ENCODE measurements at regions of chr3 and their contacts with region 1.

Region 1: GRCh38 chr3:136075218-136075808 is 109.8 kb downstream of the PPP2R3A start:
- DNase-seq: peak; percentile 82
- H3K4me3 Mint-ChIP-seq: no peak overlapping the region
- H3K27ac Mint-ChIP-seq: no peak overlapping the region
- H3K4me1 Mint-ChIP-seq: peaks cover 2% of the 10 kb centered on the region
- H3K27me3 Mint-ChIP-seq: no peaks in the 10 kb centered on the region

Region 2: DNA sequence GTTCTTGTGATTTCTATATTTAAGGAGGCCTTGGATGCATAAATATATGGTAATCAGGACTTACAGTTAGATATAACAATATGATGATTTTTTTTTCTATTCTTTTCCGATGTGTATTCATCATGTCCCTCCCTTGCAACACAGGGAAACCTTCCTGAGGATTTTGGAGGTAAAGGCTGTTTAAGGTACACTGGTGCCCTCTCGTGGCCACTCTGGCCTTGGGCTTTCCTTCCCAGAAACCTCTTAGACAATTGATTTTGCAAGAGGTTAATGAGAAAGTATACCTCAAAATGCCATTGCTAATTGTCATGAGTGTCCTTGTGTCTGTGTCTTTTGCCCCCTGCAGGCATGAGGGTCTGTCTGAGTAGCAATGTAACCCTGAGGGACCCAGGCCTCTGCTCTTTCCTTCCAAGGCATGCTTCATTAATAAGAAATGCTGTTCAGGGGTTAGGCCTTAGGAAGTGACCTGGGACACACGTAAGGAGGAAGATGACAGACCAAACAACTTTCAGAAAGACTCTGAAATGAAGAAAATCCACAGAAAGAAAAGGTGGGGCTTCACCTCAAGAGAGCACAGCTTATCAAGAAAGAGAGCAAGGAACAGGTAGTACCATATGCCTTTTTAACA is 180.1 kb before region 1 on chr3:
- CTCF ChIA-PET with region 1: no interaction called
- POLR2A ChIA-PET with region 1: no interaction called
- intact Hi-C with region 1: no loop called
- DNase-seq: peak; percentile 57
- H3K4me3 Mint-ChIP-seq: no peak overlapping the region
- H3K27ac Mint-ChIP-seq: no peak overlapping the region
- H3K4me1 Mint-ChIP-seq: no peaks in the 10 kb centered on the region
- H3K27me3 Mint-ChIP-seq: no peaks in the 10 kb centered on the region

Region 3: DNA sequence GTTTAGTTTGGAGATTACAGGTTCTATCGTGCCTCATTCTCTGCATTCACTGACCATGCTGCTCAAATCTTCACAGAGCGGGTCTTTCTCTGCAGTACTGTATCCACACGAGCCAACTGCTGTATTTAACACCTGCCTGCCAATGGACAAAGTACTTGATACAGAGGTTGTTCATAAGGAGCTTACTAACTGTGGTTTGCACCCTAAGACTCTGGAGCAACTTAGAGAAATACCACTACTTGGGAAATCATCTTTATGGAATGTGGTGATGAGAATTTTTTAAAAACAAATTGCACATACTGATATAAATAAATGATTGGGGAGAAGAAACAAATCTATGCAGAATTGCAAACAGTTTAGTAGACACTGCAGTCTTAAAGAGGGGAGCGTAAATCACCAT is 19.8 kb before region 1 on chr3:
- CTCF ChIA-PET with region 1: no interaction called
- POLR2A ChIA-PET with region 1: no interaction called
- intact Hi-C with region 1: no loop called
- DNase-seq: no peak
- H3K4me3 Mint-ChIP-seq: no peak overlapping the region
- H3K27ac Mint-ChIP-seq: no peak overlapping the region
- H3K4me1 Mint-ChIP-seq: no peaks in the 10 kb centered on the region
- H3K27me3 Mint-ChIP-seq: peaks cover 13% of the 10 kb centered on the region

Region 4: GRCh38 chr3:136196401-136197158 is 121.3 kb after region 1 on chr3:
- CTCF ChIA-PET with region 1: interaction called, 4 read pairs
- POLR2A ChIA-PET with region 1: no interaction called
- intact Hi-C with region 1: loop called (anchors 2 kb)
- DNase-seq: peak; percentile 100
- H3K4me3 Mint-ChIP-seq: peak overlapping the region; percentile 95
- H3K27ac Mint-ChIP-seq: peak overlapping the region; percentile 99
- H3K4me1 Mint-ChIP-seq: peaks cover 18% of the 10 kb centered on the region
- H3K27me3 Mint-ChIP-seq: peaks cover 5% of the 10 kb centered on the region

Region 5: DNA sequence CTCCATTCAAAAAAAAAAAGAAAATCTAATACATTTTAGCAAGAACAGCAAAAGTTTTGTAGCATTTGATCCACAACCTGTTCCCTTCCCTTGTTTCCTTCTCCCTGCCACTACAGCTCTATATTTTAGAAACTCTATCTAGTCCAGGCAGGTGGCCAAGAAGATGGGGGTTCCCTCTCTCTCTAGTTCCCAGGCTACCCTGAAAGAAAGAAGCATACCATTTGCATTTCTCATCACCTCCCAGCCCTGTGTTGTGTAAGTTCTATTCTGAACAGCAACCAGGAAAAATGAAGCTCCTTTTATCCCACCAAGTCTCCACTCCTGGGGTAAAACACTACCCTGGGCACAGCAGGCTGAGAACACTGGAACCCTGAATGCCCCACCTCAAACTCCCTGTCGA is 274.8 kb after region 1 on chr3:
- CTCF ChIA-PET with region 1: interaction called, 7 read pairs
- POLR2A ChIA-PET with region 1: no interaction called
- intact Hi-C with region 1: loop called (anchors 5 kb)
- DNase-seq: no peak
- H3K4me3 Mint-ChIP-seq: no peak overlapping the region
- H3K27ac Mint-ChIP-seq: no peak overlapping the region
- H3K4me1 Mint-ChIP-seq: peaks cover 14% of the 10 kb centered on the region
- H3K27me3 Mint-ChIP-seq: no peaks in the 10 kb centered on the region

Region 6: DNA sequence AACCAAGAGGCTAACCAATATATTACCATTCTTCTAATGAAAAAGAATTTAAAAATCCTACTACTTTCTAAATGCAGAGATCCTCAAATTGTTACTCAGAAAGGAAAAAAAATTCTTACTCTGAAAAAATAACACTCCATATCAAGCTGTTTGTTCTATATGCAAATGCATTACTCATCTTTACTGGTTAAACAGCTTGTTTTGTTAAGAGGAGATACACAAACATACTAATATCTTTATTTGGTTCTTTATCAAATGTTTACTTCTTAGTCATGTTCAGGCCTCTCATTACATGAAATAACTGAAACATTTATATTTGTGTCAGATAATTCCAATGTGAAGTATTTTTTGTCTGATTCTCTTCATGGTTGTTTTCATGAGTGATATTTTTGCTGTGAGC is 321.6 kb after region 1 on chr3:
- CTCF ChIA-PET with region 1: interaction called, 10 read pairs
- POLR2A ChIA-PET with region 1: no interaction called
- intact Hi-C with region 1: no loop called
- DNase-seq: no peak
- H3K4me3 Mint-ChIP-seq: no peak overlapping the region
- H3K27ac Mint-ChIP-seq: no peak overlapping the region
- H3K4me1 Mint-ChIP-seq: no peaks in the 10 kb centered on the region
- H3K27me3 Mint-ChIP-seq: no peaks in the 10 kb centered on the region

Region 7: GRCh38 chr3:136818769-136819391 is 743.6 kb after region 1 on chr3 and contains the start of gene SLC35G2:
- CTCF ChIA-PET with region 1: no interaction called
- POLR2A ChIA-PET with region 1: no interaction called
- intact Hi-C with region 1: loop called (anchors 5 kb)
- DNase-seq: peak; percentile 50
- H3K4me3 Mint-ChIP-seq: peak within 1 kb of the TSS; percentile 78
- H3K27ac Mint-ChIP-seq: no peak within 1 kb of the TSS
- H3K4me1 Mint-ChIP-seq: peaks cover 19% of the 10 kb centered on the region
- H3K27me3 Mint-ChIP-seq: peaks cover 34% of the 10 kb centered on the region
- total RNA-seq, gene SLC35G2: 2.1 to 2.9 TPM

Region 8: DNA sequence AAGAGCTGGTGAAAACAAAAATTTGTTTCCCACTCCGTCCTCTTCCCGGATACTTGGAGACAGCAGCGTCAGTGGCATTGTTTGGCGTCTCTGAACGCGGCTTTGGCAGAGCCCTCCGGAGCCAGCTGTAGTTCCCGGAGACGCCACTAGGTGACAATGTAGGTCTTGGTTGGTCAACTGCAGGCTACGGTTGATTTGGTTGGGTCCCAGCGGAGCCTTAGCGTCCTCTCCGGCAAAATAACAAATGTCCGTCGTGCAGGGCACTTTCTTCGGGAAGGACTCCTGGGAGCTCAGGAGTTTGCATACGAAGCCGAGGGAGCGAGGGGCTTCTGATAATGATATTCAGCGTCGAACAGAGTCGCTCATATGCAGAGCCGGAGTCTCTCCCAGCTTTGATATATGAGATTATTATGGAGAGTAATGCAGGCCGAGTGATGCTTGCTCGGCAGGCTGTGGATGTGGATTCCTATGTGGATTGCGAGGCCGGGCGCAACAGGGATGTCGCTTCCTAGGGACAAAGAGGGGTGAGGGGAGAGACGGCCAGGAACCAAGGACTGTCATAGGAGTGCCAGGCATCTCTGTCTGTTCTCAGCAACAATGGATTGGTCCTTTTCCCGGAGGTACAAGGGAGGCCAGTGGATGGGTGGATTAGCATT is 957.3 kb after region 1 on chr3:
- CTCF ChIA-PET with region 1: interaction called, 4 read pairs
- POLR2A ChIA-PET with region 1: no interaction called
- intact Hi-C with region 1: loop called (anchors 5 kb)
- DNase-seq: peak; percentile 86
- H3K4me3 Mint-ChIP-seq: peak overlapping the region; percentile 19
- H3K27ac Mint-ChIP-seq: no peak overlapping the region
- H3K4me1 Mint-ChIP-seq: peaks cover 8% of the 10 kb centered on the region
- H3K27me3 Mint-ChIP-seq: peaks cover 22% of the 10 kb centered on the region

Region 9: DNA sequence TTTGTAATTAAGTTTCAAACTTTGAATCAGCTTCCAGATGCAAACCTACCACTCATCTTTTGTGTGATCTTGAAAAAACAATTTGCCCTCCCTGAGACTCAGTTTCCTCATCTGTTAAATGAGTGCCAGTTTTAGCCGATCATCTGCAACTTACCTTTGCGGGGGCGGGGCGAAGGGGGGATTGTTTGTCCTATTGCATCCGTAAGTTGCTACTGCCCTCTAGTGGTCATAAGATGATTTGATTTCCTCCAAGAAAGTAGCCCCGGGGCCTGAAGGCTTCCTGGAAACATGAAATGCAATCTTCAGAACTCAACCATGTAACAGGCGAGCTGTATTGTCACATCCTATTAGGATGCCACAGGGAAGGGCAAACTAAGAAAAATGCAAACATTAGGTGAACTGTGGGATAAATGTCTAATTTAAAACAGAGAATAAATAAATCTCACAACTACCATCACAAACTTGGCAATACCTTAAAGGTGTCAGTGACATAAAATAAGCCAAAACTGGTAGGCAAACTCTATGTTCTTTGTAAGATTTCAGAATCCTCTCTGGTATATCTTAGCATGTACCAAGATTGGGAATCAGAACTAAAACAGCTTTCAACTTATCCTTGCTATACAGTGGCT is 1871.1 kb after region 1 on chr3:
- CTCF ChIA-PET with region 1: interaction called, 3 read pairs
- POLR2A ChIA-PET with region 1: no interaction called
- intact Hi-C with region 1: loop called (anchors 10 kb)
- DNase-seq: peak; percentile 57
- H3K4me3 Mint-ChIP-seq: no peak overlapping the region
- H3K27ac Mint-ChIP-seq: no peak overlapping the region
- H3K4me1 Mint-ChIP-seq: no peaks in the 10 kb centered on the region
- H3K27me3 Mint-ChIP-seq: no peaks in the 10 kb centered on the region

Measured in activated CD4-positive, alpha-beta memory T cell treated with anti-CD3 and anti-CD28 coated beads for 36 hours (primary cell).